HEK293T (cell line): ENCODE measurements at regions of chr7 and their contacts with region 1.

Region 1: GRCh38 chr7:3370068-3370830 is 69.2 kb downstream of the SDK1 start:
- DNase-seq: no peak

Region 2: DNA sequence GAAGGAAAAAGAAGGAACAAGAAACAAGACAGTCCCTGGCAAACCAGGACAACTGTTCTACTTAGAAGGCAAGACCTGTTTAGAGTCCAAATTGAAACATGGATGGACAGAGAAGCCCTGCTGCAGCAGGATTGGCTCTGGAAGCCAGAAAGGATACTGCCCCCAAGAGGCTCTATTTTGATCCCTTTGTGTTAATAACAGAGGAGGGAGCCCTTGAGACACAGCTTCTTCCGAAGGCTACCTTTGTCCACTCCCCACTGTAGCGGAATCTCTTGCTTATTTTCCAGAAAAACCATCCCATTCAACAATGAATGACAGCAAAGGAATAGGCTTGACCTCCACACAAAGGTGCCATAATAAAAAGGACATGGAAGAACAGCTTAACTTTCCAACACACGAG is 1191.5 kb after region 1 on chr7:
- CTCF ChIA-PET with region 1: interaction called, 12 read pairs
- POLR2A ChIA-PET with region 1: no interaction called
- DNase-seq: peak; percentile 22